Vagina (tissue), 2 donors: ENCODE measurements at regions of chr11 and their contacts with region 1.

Region 1: GRCh38 chr11:75384438-75385080 is 14.8 kb upstream of the RPS3 start:
- DNase-seq: no peak
- H3K4me3 ChIP-seq: no peak overlapping the region
- H3K27ac ChIP-seq: no peak overlapping the region
- H3K4me1 ChIP-seq: peaks cover 6% of the 10 kb centered on the region
- H3K27me3 ChIP-seq: no peaks in the 10 kb centered on the region
- CTCF ChIP-seq: peak; percentile 96 to 97 (median 96)
- POLR2A ChIP-seq: no peak

Region 2: DNA sequence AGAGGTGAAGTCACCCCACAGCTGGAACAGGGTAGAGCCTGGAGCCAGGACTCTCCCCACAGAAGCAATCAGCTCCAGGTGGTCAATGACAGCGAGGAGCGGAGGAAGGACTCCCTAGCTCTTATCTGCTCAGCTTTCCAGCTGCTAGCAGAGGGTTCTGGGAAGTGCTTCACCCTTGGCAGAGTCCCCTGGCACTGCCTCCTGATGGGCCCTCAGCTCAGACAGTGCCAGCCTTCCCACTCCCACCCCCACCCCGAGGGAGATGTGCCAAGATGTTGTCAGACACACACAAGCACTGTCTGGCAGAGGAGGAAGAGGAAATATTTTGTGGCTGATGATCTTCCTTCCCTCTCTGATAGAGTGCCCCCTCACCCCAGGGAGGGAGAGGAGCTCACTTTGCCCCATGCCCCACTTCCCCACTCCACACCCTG is 189.4 kb before region 1 on chr11:
- intact Hi-C with region 1: no loop called
- DNase-seq: no peak
- H3K4me3 ChIP-seq: no peak overlapping the region
- H3K27ac ChIP-seq: no peak overlapping the region
- H3K4me1 ChIP-seq: no peaks in the 10 kb centered on the region
- H3K27me3 ChIP-seq: no peaks in the 10 kb centered on the region
- CTCF ChIP-seq: no peak
- POLR2A ChIP-seq: no peak

Region 3: GRCh38 chr11:75328426-75329277 is 55.9 kb before region 1 on chr11:
- intact Hi-C with region 1: loop called (anchors 2 kb)
- DNase-seq: no peak
- H3K4me3 ChIP-seq: no peak overlapping the region
- H3K27ac ChIP-seq: peak overlapping the region; percentile 69
- H3K4me1 ChIP-seq: peaks cover 53% of the 10 kb centered on the region
- H3K27me3 ChIP-seq: no peaks in the 10 kb centered on the region
- CTCF ChIP-seq: peak; percentile 58 to 72 (median 69)
- POLR2A ChIP-seq: no peak

Region 4: DNA sequence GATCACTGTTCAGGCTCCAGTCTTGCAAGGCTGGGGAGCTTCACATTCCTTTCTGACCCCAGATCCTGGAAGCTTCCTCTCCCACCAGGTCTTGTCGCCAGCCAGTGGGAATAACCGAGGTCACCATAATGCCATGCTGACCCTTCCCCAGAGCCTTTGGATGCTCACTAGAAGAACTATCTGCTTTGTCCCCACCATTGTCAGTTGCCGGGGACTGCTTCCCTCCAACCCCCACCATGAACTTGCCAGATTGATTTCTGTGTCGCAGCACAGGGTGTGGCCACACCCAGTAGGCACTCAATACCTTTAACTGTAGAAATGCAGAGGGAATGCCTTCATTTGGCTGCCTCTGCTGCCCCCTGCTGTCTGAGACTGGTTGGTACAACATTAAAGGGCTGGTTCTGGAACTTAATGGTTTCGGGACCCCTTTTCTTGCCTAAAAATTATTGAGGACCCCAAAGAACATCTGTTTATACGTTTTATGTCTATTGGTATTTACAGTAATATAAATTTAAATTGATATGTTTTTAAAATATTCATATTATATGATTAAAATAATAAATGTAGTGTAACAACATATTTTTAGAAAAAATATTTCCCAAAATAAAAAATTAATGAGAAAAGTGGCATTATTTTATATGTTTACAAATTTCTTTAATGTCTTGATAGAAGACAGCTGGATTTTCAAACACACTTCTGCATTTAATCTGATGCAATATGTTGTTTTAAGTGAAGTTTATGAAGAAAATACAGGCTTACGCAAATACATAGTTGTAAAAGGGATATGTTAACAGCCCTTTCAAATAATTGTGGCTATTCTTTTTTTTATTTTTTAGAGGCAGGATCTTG is 147.9 kb after region 1 on chr11:
- intact Hi-C with region 1: no loop called
- DNase-seq: no peak
- H3K4me3 ChIP-seq: no peak overlapping the region
- H3K27ac ChIP-seq: no peak overlapping the region
- H3K4me1 ChIP-seq: peaks cover 11% of the 10 kb centered on the region
- H3K27me3 ChIP-seq: no peaks in the 10 kb centered on the region
- CTCF ChIP-seq: peak; percentile 88 to 97 (median 92)
- POLR2A ChIP-seq: no peak

Region 5: DNA sequence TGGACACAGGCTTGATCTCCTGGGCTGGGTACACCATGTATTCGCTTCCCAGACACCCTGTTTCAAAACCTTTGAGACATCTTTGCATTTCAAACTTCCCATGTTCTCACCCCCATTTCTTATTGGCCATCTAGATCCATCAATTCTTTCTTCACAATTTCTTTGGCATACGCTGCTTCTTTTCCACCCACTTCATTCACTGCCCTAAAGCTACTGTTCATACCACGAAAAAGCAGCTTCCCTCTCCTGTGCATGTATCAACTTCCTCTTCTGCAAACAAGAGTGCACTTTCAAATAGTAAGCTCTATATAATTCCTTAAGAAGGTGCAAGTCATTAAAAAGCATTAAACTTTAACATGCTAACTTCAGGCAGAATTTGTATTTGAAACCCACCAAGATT is 451.9 kb after region 1 on chr11:
- intact Hi-C with region 1: no loop called
- DNase-seq: no peak
- H3K4me3 ChIP-seq: no peak overlapping the region
- H3K27ac ChIP-seq: no peak overlapping the region
- H3K4me1 ChIP-seq: peaks cover 31% of the 10 kb centered on the region
- H3K27me3 ChIP-seq: no peaks in the 10 kb centered on the region
- CTCF ChIP-seq: no peak
- POLR2A ChIP-seq: no peak